Activated CD4-positive, alpha-beta memory T cell treated with anti-CD3 and anti-CD28 coated beads for 36 hours (primary cell): ENCODE measurements at regions of chr2 and their contacts with region 1.

Region 1: GRCh38 chr2:28870146-28870891 is at the start of gene TRMT61B:
- DNase-seq: peak; percentile 98
- H3K4me3 Mint-ChIP-seq: peak within 1 kb of the TSS; percentile 93
- H3K27ac Mint-ChIP-seq: peak within 1 kb of the TSS; percentile 89
- H3K4me1 Mint-ChIP-seq: peaks cover 29% of the 10 kb centered on the region
- H3K27me3 Mint-ChIP-seq: no peaks in the 10 kb centered on the region
- total RNA-seq, gene TRMT61B: 16.7 to 18.1 TPM

Region 2: DNA sequence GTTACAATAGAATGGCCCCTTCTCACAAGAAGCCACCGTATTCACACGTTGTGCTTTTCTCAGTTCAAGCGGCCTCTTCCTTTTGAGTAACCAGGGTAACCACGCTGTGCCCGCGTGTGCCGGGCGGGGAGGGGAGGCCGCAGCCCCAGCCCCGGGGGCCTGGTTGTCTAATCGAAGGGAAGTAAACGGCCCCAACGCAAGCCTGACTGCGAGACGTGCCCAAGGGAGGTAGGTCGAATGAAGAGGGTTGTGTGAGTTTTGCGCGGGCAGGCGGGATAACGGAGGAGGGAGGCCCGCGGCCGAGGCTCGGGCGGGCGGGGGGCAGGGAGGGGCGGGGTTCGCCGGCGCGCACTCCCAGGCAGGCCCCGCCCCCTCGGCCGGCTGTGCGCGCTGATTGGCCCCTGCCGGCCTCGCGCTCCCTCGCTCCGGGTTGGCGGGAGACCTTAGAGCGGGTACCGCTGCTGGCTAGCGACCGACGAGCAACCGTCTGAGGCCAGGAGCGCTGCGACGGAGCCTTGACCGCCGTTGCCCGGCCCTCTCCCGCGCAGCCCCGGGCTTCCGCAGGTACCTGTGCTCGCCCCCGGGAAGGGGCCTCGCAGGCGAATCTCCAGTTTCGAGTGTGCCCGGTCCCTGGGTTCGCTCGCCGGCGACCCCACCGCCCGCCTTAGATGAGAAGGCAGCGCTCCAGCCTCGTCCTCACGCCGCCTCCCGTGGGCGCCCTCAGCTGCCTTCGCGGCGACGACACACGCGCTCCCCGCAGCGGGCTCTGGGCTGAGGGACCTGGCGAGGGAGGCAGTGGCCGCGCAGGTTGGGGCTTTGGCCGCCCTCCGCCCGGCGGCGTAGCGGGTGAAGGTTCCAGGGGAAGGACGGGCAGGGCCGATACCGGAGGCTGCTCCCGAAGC is 59.7 kb before region 1 on chr2 and contains the start of gene SPDYA:
- CTCF ChIA-PET with region 1: no interaction called
- POLR2A ChIA-PET with region 1: interaction called, 3 read pairs
- intact Hi-C with region 1: loop called (anchors 2 kb)
- DNase-seq: peak; percentile 86
- H3K4me3 Mint-ChIP-seq: peak within 1 kb of the TSS; percentile 74
- H3K27ac Mint-ChIP-seq: no peak within 1 kb of the TSS
- H3K4me1 Mint-ChIP-seq: peaks cover 13% of the 10 kb centered on the region
- H3K27me3 Mint-ChIP-seq: peaks cover 2% of the 10 kb centered on the region
- total RNA-seq, gene SPDYA: 0.92 to 1.1 TPM